Panc1 (cell line): ENCODE measurements at regions of chr1 and their contacts with region 1.

Region 1: GRCh38 chr1:28886731-28887418 is 27.5 kb upstream of the EPB41 start:
- DNase-seq: no peak
- ATAC-seq: peak; percentile 82
- H3K4me3 ChIP-seq: peak overlapping the region; percentile 55 to 77
- H3K27ac ChIP-seq: no peak overlapping the region
- H3K4me1 ChIP-seq: peaks cover 12% of the 10 kb centered on the region
- H3K27me3 ChIP-seq: no peaks in the 10 kb centered on the region
- CTCF ChIP-seq: no peak

Region 2: GRCh38 chr1:28926629-28927265 is 39.9 kb after region 1 on chr1:
- CTCF ChIA-PET with region 1: no interaction called
- POLR2A ChIA-PET with region 1: interaction called, 10 read pairs
- in situ Hi-C with region 1: no loop called
- intact Hi-C with region 1: no loop called
- DNase-seq: no peak
- ATAC-seq: no peak
- H3K4me3 ChIP-seq: no peak overlapping the region
- H3K27ac ChIP-seq: peak overlapping the region; percentile 58; the same call in 1 of the 2 replicates
- H3K4me1 ChIP-seq: peaks cover 10% of the 10 kb centered on the region; the same call in 1 of the 2 replicates
- H3K27me3 ChIP-seq: no peaks in the 10 kb centered on the region
- CTCF ChIP-seq: no peak

Region 3: DNA sequence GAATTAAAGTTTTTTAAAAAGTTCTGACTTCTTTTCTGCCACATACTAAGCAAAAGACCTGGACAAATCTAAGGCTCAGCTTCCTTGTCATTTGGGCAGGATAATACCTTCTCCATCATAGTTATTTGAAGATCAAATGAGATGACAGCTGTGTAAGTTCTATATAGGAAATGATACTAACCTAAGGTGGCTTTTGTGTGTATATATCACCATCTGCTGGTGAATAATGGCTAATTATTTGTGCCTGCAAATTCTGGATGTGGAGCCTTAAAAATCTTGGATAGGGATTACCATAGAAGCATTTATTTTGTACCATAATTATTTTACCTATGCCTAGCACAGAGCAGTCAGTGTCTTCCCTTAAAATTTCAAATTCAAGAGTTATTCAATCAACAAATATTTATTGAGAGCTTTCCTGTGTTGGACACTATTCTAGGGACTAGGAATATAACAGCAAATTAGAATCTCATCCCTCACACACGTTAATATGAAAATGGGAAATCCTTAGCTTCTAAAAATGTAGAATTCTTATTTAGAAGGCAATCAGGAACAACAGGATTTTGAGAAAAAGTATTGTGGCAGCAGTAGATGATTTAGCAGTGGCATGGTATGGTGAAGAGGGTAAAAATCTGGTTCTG is 147.1 kb after region 1 on chr1:
- CTCF ChIA-PET with region 1: interaction called, 24 read pairs
- POLR2A ChIA-PET with region 1: interaction called, 4 read pairs
- in situ Hi-C with region 1: no loop called
- intact Hi-C with region 1: loop called (anchors 1 kb)
- DNase-seq: peak; percentile 30
- ATAC-seq: peak; percentile 78
- H3K4me3 ChIP-seq: no peak overlapping the region
- H3K27ac ChIP-seq: no peak overlapping the region
- H3K4me1 ChIP-seq: no peaks in the 10 kb centered on the region
- H3K27me3 ChIP-seq: no peaks in the 10 kb centered on the region
- CTCF ChIP-seq: peak; percentile 64; the same call in 1 of the 2 replicates

Region 4: DNA sequence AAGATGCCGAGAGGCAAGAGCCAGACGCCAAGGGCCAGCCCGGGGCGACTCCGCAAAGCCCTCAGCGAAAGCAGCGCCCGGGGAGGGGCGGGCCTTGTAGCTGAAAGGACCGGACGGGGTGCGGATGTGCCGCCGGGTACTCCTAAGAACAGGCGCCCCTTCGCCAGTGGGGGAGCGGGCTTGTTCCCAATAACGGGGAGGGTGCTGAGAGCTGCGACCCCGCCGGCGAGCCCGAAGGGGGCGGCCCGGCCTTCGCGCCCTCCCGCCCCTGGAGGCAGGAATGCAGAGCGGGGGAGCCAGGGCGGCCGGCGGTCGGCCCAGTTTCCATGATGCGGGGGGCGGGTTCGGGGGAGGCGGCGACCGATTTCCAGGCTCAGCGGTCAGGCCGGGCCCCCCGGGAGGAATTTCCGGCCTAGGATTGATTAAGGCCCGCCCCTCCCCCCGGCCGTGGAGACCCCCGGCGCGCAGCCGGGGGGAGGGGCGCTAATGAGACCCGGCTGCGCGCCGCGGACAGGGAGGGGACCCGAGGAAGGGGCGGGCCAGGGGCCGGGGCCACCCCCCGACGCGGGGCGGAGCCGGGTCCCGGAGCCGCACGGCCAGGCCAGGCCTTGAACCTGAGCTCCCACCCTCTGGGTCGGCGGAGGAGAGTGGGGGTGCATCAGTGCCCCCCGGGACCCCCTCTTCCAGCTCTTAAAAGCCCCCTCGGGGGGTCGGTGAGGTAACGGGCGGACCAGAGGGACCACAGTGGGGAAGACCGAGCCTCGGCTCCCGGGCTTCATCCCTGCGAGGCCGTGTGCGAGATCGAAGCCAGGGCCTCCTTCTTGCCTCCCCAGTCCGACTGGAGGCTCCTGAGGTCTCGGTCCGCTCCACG is 237.7 kb after region 1 on chr1:
- CTCF ChIA-PET with region 1: interaction called, 6 read pairs
- POLR2A ChIA-PET with region 1: no interaction called
- in situ Hi-C with region 1: no loop called
- intact Hi-C with region 1: loop called (anchors 5 kb)
- DNase-seq: no peak
- ATAC-seq: peak; percentile 74
- H3K4me3 ChIP-seq: peak overlapping the region; percentile 62 to 74
- H3K27ac ChIP-seq: peak overlapping the region; percentile 72
- H3K4me1 ChIP-seq: no peaks in the 10 kb centered on the region; the same call in 1 of the 2 replicates
- H3K27me3 ChIP-seq: no peaks in the 10 kb centered on the region; the same call in 1 of the 2 replicates
- CTCF ChIP-seq: no peak

Region 5: GRCh38 chr1:29202584-29203340 is 315.9 kb after region 1 on chr1:
- CTCF ChIA-PET with region 1: interaction called, 11 read pairs
- POLR2A ChIA-PET with region 1: no interaction called
- in situ Hi-C with region 1: no loop called
- intact Hi-C with region 1: loop called (anchors 5 kb)
- DNase-seq: peak; percentile 91
- ATAC-seq: peak; percentile 100
- H3K4me3 ChIP-seq: no peak overlapping the region
- H3K27ac ChIP-seq: peak overlapping the region; percentile 77
- H3K4me1 ChIP-seq: peaks cover 8% of the 10 kb centered on the region
- H3K27me3 ChIP-seq: no peaks in the 10 kb centered on the region
- CTCF ChIP-seq: peak; percentile 95